KBM-7 (cell line): ENCODE measurements at regions of chr15 and their contacts with region 1.

Region 1: DNA sequence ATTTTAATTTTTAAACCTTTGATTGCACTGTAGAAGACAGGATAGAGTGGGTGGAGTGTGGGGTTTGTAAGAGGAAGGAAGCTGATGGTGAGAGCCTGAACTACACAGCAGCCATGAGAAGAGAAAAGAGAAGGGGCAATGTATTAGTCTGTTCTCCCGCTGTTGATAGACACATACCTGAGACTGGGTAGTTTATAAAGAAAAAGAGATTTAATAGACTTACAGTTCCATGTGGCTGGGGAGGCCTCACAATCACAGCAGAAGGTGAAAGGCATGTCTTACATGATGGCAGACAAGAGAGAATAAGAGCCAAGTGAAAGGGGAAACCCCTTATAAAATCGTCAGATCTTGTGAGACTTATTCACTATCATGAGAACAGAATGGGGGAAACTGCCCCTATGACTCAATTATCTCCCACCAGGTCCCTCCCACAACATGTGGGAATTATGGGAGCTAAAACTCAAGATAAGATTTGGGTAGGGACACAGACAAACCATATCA is 37.3 kb downstream of the STARD5 start:
- DNase-seq: peak; percentile 63

Region 2: DNA sequence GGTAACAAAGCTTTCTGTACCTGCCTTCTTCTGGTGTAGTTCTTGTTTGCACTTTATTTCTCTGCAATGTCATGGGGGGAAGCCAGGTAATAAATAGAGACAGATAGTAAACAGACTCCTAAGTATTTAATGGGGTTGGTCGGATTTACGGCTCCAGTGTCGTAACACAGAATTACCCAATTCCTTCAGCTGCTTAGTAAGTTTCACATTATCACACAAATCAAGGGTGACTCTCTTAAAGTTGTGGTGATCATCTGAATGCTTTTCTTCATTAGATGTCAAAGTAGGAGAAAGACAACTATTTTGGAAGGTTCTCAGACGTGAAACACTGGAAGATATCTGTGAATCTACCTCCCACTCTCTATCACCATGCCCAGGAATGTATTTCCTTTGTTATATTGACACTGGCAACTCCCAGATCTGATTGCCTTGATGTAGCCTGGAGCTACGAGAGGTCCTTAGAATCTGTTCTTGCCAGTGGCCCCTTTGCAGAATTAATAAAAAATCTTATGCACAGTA is 112.3 kb after region 1 on chr15:
- in situ Hi-C with region 1: loop called (anchors 10 kb)
- DNase-seq: no peak